Aorta (tissue), 5 donors: ENCODE measurements at regions of chr7 and their contacts with region 1.

Region 1: DNA sequence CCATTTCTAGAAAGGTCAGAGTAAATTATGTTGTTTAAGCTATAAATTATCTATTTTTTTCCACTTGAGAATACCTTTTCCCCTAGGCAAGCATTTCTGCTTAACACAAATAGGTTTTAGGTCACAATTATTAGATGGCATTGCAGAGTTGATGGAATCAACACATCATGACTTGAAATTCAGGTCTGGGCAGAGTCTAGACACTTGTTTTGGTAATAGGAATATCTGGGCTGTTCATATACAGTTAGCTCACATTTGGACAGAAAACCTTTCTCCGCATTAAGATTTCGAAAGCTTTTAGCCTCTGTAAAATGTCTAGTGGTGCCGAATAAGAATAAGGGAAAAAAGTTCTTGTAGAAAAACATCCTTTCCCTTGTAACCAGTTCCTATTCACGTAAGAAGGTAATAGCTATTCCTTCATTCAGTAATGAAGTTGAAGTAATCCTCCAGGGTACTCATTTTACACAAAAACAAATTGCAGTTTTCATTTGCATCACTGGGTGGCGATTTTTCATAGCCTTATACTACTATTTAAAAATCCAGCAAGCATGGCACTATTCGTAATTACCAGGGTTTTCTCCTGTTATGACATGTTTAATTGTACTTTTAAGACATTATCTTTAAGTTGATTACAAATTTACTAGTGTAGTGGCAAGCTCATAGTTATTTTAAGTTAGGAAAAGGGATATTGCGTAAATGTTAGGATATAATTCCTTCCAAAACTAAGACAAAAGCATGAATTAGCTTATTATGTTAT is 37.0 kb downstream of the RPA3 start:
- DNase-seq: no peak
- ATAC-seq: peak; percentile 85
- H3K4me3 ChIP-seq: peak overlapping the region; percentile 20 to 64
- H3K27ac ChIP-seq: no peak overlapping the region
- H3K4me1 ChIP-seq: no peaks in the 10 kb centered on the region
- H3K27me3 ChIP-seq: no peaks in the 10 kb centered on the region

Region 2: DNA sequence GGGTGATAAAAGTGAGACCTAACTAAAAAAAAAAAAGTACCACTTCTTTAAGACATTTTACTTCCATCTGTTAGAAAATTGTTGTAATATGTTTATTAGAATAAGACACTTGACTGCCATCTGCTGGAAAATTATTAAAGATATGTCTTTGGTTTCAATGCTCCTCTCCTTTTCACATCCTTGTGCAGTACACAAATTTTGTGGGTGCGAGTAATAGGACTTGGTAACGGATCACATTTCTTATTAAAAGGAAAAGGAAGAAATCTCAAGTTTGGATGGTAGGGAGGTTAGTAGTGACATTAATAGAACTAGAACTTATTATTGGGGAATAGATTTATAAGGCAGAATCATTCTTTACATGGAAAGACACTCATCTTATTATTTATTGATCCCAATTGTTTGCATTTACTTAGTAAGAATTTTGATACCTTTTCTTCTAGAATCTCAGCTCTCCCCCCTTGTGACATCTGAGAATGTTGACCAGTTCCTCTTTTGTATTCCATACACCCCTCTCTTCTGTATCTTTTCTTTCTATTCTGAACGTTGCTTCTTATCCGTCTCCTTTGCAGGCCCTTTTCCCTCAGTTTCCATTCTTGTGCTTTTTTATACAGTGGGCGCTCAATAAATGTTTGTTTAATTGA is 80.1 kb after region 1 on chr7:
- intact Hi-C with region 1: loop called (anchors 5 kb)
- DNase-seq: no peak
- ATAC-seq: peak; percentile 74
- H3K4me3 ChIP-seq: peak overlapping the region; percentile 78 to 84
- H3K27ac ChIP-seq: no peak overlapping the region
- H3K4me1 ChIP-seq: no peaks in the 10 kb centered on the region
- H3K27me3 ChIP-seq: no peaks in the 10 kb centered on the region

Region 3: GRCh38 chr7:7968543-7969305 is 287.4 kb after region 1 on chr7 and contains the start of gene GLCCI1:
- intact Hi-C with region 1: loop called in 1 of 2 experiments (anchors 10 kb)
- DNase-seq: peak; percentile 98
- ATAC-seq: peak; percentile 98
- H3K4me3 ChIP-seq: peak within 1 kb of the TSS; percentile 81 to 90
- H3K27ac ChIP-seq: peak within 1 kb of the TSS; percentile 32 to 85
- H3K4me1 ChIP-seq: peaks cover 0 to 2% of the 10 kb centered on the region in 2 donors
- H3K27me3 ChIP-seq: no peaks in the 10 kb centered on the region
- total RNA-seq, gene GLCCI1: 8.4 to 12.0 TPM

Region 4: DNA sequence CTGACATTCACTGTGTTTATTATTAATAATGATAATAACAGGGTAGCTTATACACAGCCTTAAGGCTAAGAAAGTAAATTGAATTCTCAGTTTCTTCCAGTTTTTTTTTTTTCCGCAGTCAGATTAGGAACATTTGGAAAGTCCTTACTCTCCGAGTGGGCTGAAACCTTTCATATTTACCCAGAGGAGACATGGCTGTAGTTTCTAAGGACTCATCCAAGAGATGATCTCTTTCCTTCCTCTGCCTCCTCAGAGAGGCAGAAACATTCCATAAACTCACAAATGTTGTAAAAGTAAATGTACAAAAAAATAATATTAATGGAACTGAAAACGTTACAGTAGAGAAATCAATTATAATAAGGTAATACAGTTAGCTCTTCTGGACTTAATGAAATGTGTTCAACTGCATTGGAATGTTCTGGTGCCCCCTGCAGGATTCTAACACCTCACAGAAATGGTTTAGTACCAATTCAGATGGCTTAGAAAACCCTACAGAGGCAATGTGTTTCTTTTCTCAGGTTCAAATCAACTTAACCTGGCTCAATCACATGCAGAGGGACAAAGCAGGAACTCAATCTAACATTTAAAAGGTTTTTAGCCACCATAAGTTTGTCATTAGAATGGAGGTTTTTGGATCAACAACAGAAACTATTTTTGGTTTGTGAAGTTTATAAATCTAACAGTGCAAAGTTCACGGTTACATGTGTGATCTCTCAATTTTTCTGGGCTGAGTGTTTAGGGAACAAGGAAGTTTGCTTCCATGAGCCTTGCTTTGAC is 508.9 kb after region 1 on chr7:
- intact Hi-C with region 1: loop called in 1 of 2 experiments (anchors 5 kb)
- DNase-seq: peak in 1 of 2 donors; percentile 51
- ATAC-seq: peak; percentile 72
- H3K4me3 ChIP-seq: no peak overlapping the region
- H3K27ac ChIP-seq: no peak overlapping the region
- H3K4me1 ChIP-seq: no peaks in the 10 kb centered on the region
- H3K27me3 ChIP-seq: no peaks in the 10 kb centered on the region